ENCODE measurements at regions of chr4 and their contacts with region 1.

Region 1: GRCh38 chr4:89434364-89434988 is 126.9 kb upstream of the GPRIN3 start:
- DNase-seq: no peak
- ATAC-seq: no peak
- H3K4me3 ChIP-seq: no peak overlapping the region
- H3K27ac ChIP-seq: no peak overlapping the region
- H3K4me1 ChIP-seq: no peaks in the 10 kb centered on the region
- H3K27me3 ChIP-seq: peaks cover 0 to 3% of the 10 kb centered on the region in 2 donors

Region 2: GRCh38 chr4:89164400-89164799 is 270.1 kb before region 1 on chr4:
- intact Hi-C with region 1: loop called in 1 of 2 experiments (anchors 10 kb)
- DNase-seq: no peak
- ATAC-seq: no peak
- H3K4me3 ChIP-seq: no peak overlapping the region
- H3K27ac ChIP-seq: no peak overlapping the region
- H3K4me1 ChIP-seq: no peaks in the 10 kb centered on the region
- H3K27me3 ChIP-seq: no peaks in the 10 kb centered on the region

Region 3: GRCh38 chr4:89226665-89227574 is 207.6 kb before region 1 on chr4:
- intact Hi-C with region 1: loop called in 1 of 2 experiments (anchors 5 kb)
- DNase-seq: peak; percentile 78 to 84
- ATAC-seq: peak; percentile 82
- H3K4me3 ChIP-seq: no peak overlapping the region
- H3K27ac ChIP-seq: no peak overlapping the region
- H3K4me1 ChIP-seq: no peaks in the 10 kb centered on the region
- H3K27me3 ChIP-seq: no peaks in the 10 kb centered on the region